ENCODE measurements at regions of chr13 and their contacts with region 1.

Region 1: DNA sequence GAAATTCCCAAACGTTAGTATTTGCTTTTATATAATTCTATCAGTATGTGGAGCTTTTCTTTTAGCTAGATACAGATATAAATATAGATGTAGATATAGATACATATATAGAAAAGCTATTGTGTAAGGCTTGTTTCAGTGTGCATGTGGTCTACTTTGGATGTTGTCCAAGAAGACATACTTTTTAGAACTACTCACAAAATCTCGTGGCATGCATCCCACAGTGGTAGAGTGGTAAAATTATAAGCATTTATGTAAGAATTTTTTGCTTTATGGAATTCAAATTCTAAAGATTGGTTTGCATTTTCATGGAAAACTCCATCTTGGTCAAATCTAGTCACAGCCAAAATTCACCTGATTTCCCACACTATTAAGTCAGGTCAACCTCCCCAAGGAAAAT is 880.4 kb downstream of the EFNB2 start:
- DNase-seq: no peak
- ATAC-seq: no peak
- H3K4me3 ChIP-seq: no peak overlapping the region
- H3K27ac ChIP-seq: no peak overlapping the region
- H3K4me1 ChIP-seq: no peaks in the 10 kb centered on the region
- H3K27me3 ChIP-seq: no peaks in the 10 kb centered on the region
- CTCF ChIP-seq: no peak
- EP300 ChIP-seq: no peak
- POLR2A ChIP-seq: no peak
- RAD21 ChIP-seq: no peak

Region 2: GRCh38 chr13:105665284-105665683 is 10.2 kb after region 1 on chr13:
- CTCF ChIA-PET with region 1: interaction called, 4 read pairs
- POLR2A ChIA-PET with region 1: no interaction called
- RAD21 ChIA-PET with region 1: no interaction called
- SMC1A ChIA-PET with region 1: interaction called, 12 read pairs
- in situ Hi-C with region 1: no loop called
- intact Hi-C with region 1: no loop called
- DNase-seq: no peak
- ATAC-seq: no peak
- H3K4me3 ChIP-seq: no peak overlapping the region
- H3K27ac ChIP-seq: no peak overlapping the region
- H3K4me1 ChIP-seq: no peaks in the 10 kb centered on the region
- H3K27me3 ChIP-seq: no peaks in the 10 kb centered on the region
- CTCF ChIP-seq: no peak
- EP300 ChIP-seq: no peak
- POLR2A ChIP-seq: no peak
- RAD21 ChIP-seq: no peak

Measured in GM12878 (cell line).